ENCODE measurements at regions of chr17 and their contacts with region 1.

Region 1: DNA sequence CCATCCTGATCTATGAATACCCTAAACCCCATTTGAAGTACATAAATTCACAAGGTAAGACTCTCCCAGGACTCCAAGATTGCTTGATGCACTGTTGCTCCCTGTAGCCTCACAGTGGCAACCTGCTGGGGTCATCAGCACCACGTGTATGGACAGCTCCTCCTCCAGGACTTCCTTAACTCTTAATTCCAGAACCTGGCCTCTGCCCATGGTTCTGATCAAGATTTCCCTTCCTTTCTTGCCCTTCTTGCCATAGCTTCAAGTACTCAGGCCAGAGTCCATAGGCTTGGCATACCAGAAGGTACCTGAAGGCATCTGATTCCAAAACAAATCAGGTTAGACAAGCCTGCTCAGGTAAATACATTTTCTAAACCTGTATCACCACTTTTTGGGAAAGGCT is 33.9 kb upstream of the NLK start:
- DNase-seq: peak in 1 of 9 experiments; percentile 3
- ATAC-seq: no peak
- H3K4me3 ChIP-seq: no peak overlapping the region
- H3K4me3 Mint-ChIP-seq: no peak overlapping the region
- H3K27ac ChIP-seq: no peak overlapping the region
- H3K27ac Mint-ChIP-seq: no peak overlapping the region
- H3K4me1 ChIP-seq: peaks cover 9% of the 10 kb centered on the region
- H3K4me1 Mint-ChIP-seq: no peaks in the 10 kb centered on the region
- H3K27me3 ChIP-seq: no peaks in the 10 kb centered on the region
- H3K27me3 Mint-ChIP-seq: peaks cover 5% of the 10 kb centered on the region
- CTCF ChIP-seq: no peak

Region 2: GRCh38 chr17:27805520-27806146 is 202.9 kb before region 1 on chr17:
- CTCF ChIA-PET with region 1: no interaction called
- POLR2A ChIA-PET with region 1: no interaction called
- intact Hi-C with region 1: no loop called
- DNase-seq: peak; percentile 62 to 91 (median 79)
- ATAC-seq: peak; percentile 69
- H3K4me3 ChIP-seq: peak overlapping the region; percentile 44 to 54
- H3K4me3 Mint-ChIP-seq: peak overlapping the region; percentile 84
- H3K27ac ChIP-seq: peak overlapping the region; percentile 24 to 56
- H3K27ac Mint-ChIP-seq: peak overlapping the region; percentile 94
- H3K4me1 ChIP-seq: peaks cover 21% of the 10 kb centered on the region
- H3K4me1 Mint-ChIP-seq: peaks cover 27% of the 10 kb centered on the region
- H3K27me3 ChIP-seq: no peaks in the 10 kb centered on the region
- H3K27me3 Mint-ChIP-seq: no peaks in the 10 kb centered on the region
- CTCF ChIP-seq: peak; percentile 69

Region 3: GRCh38 chr17:27939474-27940465 is 68.8 kb before region 1 on chr17:
- CTCF ChIA-PET with region 1: no interaction called
- POLR2A ChIA-PET with region 1: no interaction called
- intact Hi-C with region 1: no loop called
- DNase-seq: no peak
- ATAC-seq: no peak
- H3K4me3 ChIP-seq: no peak overlapping the region
- H3K4me3 Mint-ChIP-seq: no peak overlapping the region
- H3K27ac ChIP-seq: no peak overlapping the region
- H3K27ac Mint-ChIP-seq: no peak overlapping the region
- H3K4me1 ChIP-seq: no peaks in the 10 kb centered on the region
- H3K4me1 Mint-ChIP-seq: peaks cover 2% of the 10 kb centered on the region
- H3K27me3 ChIP-seq: no peaks in the 10 kb centered on the region
- H3K27me3 Mint-ChIP-seq: peaks cover 21% of the 10 kb centered on the region
- CTCF ChIP-seq: no peak

Region 4: GRCh38 chr17:28018439-28019070 is 10.0 kb after region 1 on chr17:
- CTCF ChIA-PET with region 1: no interaction called
- POLR2A ChIA-PET with region 1: no interaction called
- intact Hi-C with region 1: loop called in 1 of 2 experiments (anchors 1 kb)
- DNase-seq: no peak
- ATAC-seq: no peak
- H3K4me3 ChIP-seq: no peak overlapping the region
- H3K4me3 Mint-ChIP-seq: no peak overlapping the region
- H3K27ac ChIP-seq: no peak overlapping the region
- H3K27ac Mint-ChIP-seq: no peak overlapping the region
- H3K4me1 ChIP-seq: no peaks in the 10 kb centered on the region
- H3K4me1 Mint-ChIP-seq: no peaks in the 10 kb centered on the region
- H3K27me3 ChIP-seq: no peaks in the 10 kb centered on the region
- H3K27me3 Mint-ChIP-seq: peaks cover 11% of the 10 kb centered on the region
- CTCF ChIP-seq: no peak

Region 5: GRCh38 chr17:28426081-28426519 is 417.6 kb after region 1 on chr17:
- CTCF ChIA-PET with region 1: no interaction called
- POLR2A ChIA-PET with region 1: no interaction called
- intact Hi-C with region 1: no loop called
- DNase-seq: no peak
- ATAC-seq: no peak
- H3K4me3 ChIP-seq: no peak overlapping the region
- H3K4me3 Mint-ChIP-seq: no peak overlapping the region
- H3K27ac ChIP-seq: no peak overlapping the region
- H3K27ac Mint-ChIP-seq: no peak overlapping the region
- H3K4me1 ChIP-seq: no peaks in the 10 kb centered on the region
- H3K4me1 Mint-ChIP-seq: no peaks in the 10 kb centered on the region
- H3K27me3 ChIP-seq: no peaks in the 10 kb centered on the region
- H3K27me3 Mint-ChIP-seq: peaks cover 11% of the 10 kb centered on the region
- CTCF ChIP-seq: no peak